K562 (cell line): ENCODE measurements at regions of chr7 and their contacts with region 1.

Region 1: GRCh38 chr7:116211006-116211912 is 920 bp downstream of the TES start:
- DNase-seq: peak; percentile 82 to 95 (median 88)
- ATAC-seq: peak; percentile 88
- H3K4me3 ChIP-seq: peak overlapping the region; percentile 74
- H3K27ac ChIP-seq: peak overlapping the region; percentile 88
- H3K4me1 ChIP-seq: peaks cover 10 to 28% of the 10 kb centered on the region in 2 experiments
- H3K27me3 ChIP-seq: no peaks in the 10 kb centered on the region
- CTCF ChIP-seq: no peak
- EP300 ChIP-seq: peak; percentile 54; the same call in 1 of the 2 replicates
- POLR2A ChIP-seq: peak; percentile 92
- RAD21 ChIP-seq: peak in 1 of 2 experiments; percentile 7; a peak in 2 of 4 replicates

Region 2: DNA sequence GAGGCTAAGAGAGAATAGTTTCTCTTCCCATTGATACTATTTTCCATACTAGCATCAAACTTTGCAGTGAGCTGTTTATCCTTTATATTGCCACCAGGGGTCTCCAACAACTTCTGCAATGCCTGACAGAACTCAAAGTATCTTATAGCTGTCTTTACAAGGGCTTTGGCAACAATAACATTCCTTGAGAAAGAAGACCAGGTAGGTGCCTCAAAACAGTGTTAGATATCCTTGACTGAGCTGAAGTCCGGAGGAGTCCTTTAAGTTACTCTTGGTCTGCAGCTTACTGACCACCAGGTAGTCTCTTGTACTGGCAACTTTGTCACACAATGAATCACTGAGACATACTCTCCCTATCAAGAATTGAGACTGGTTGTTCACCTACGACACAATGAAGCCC is 31.0 kb before region 1 on chr7:
- CTCF ChIA-PET with region 1: no interaction called
- POLR2A ChIA-PET with region 1: interaction called, 5 read pairs
- in situ Hi-C with region 1: no loop called
- intact Hi-C with region 1: loop called (anchors 1 kb)
- DNase-seq: peak; percentile 39 to 62 (median 48)
- ATAC-seq: peak; percentile 93
- H3K4me3 ChIP-seq: no peak overlapping the region
- H3K27ac ChIP-seq: no peak overlapping the region
- H3K4me1 ChIP-seq: peaks cover 0 to 5% of the 10 kb centered on the region in 2 experiments; a peak in 1 of 5 replicates
- H3K27me3 ChIP-seq: no peaks in the 10 kb centered on the region
- CTCF ChIP-seq: peak; percentile 70 to 92 (median 79)
- EP300 ChIP-seq: no peak
- POLR2A ChIP-seq: no peak
- RAD21 ChIP-seq: peak; percentile 98 to 99

Region 3: GRCh38 chr7:116224492-116225098 is 13.3 kb after region 1 on chr7:
- CTCF ChIA-PET with region 1: no interaction called
- POLR2A ChIA-PET with region 1: interaction called, 10 read pairs
- in situ Hi-C with region 1: no loop called
- intact Hi-C with region 1: no loop called
- DNase-seq: no peak
- ATAC-seq: no peak
- H3K4me3 ChIP-seq: no peak overlapping the region
- H3K27ac ChIP-seq: no peak overlapping the region
- H3K4me1 ChIP-seq: peaks cover 0 to 8% of the 10 kb centered on the region in 2 experiments; a peak in 2 of 5 replicates
- H3K27me3 ChIP-seq: no peaks in the 10 kb centered on the region
- CTCF ChIP-seq: no peak
- EP300 ChIP-seq: no peak
- POLR2A ChIP-seq: no peak
- RAD21 ChIP-seq: no peak

Region 4: DNA sequence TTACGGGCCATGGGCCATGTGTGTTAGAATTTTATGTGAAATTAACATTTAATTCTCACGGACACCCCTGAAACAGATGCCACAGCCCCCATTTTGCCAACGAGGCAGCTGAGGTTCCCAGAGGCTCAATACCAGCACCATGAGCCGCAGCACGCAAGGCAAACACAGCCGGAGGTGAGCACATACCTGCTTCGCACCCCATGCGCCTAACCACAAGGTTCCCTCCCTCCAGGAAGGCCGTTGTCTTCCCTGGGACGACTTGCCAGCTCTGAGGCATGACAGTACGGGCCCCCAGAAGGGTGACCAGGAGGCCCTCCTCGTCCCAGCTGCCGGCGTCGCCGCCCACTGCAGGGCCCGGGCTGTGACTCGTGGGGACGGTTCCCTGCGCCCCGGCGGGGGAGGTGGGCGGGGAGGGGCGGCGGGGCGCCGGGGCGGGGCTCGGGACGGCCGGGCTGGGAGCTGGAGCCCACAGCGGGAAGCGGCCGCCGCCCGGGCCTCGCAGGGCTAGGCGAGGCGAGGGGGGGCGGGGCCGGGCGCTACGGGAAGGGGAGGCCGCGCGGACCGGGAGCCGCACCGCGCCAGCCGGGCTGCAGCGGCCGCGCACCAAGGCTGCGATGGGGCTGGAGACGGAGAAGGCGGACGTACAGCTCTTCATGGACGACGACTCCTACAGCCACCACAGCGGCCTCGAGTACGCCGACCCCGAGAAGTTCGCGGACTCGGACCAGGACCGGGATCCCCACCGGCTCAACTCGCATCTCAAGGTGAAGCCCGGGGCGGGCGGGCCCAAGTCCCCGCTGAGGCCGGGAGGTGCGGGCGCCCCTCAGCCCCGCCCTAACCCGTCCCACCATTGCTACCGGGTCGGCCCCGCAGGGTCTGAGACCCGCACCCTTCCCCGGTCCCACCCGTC is 288.2 kb after region 1 on chr7 and contains the start of gene CAV2:
- CTCF ChIA-PET with region 1: no interaction called
- POLR2A ChIA-PET with region 1: no interaction called
- in situ Hi-C with region 1: no loop called
- intact Hi-C with region 1: loop called (anchors 5 kb)
- DNase-seq: peak; percentile 88 to 96 (median 93)
- ATAC-seq: peak; percentile 85
- H3K4me3 ChIP-seq: peak within 1 kb of the TSS; percentile 53
- H3K27ac ChIP-seq: peak within 1 kb of the TSS; percentile 73
- H3K4me1 ChIP-seq: peaks cover 25 to 38% of the 10 kb centered on the region in 2 experiments
- H3K27me3 ChIP-seq: no peaks in the 10 kb centered on the region
- CTCF ChIP-seq: no peak
- EP300 ChIP-seq: no peak
- POLR2A ChIP-seq: peak; percentile 69
- RAD21 ChIP-seq: no peak
- polyA plus RNA-seq, gene CAV2: 16.1 to 16.5 TPM

Region 5: DNA sequence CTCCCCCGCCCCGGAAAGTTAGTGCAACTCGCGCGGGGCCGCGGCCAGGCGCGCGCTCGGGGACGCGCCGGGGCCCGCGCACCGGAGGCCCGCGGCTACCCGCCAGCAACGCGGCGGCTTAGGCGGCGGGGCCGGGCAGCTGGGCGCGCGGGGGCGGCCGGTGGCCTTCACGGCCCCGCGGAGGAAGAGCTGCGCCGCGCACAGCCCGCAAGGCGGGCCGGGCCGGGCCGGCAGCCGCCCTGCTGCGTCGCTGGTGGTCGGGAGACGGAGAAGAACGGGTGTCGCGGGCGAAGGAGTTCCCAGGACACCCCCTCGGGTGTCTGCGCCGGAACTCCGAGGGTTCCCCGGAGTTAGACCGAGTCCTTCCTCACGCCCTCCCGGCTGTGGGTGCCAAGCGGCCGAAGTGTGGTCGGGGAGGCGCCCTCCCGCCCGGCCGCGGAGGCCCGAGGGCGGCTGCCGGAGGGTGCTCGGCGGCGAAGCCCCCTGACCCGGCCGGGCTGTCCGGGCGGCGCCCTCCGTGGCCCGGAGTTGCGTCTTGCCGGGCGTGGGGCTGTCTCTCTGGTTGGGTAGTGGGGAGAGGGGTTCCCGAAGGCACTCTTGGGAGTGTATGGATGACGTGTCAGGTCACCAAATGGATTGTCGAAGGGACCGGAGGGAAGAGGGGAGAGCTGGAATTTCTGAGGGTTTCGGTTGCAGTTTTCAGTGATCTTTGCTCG is 742.6 kb after region 1 on chr7:
- CTCF ChIA-PET with region 1: no interaction called
- POLR2A ChIA-PET with region 1: no interaction called
- in situ Hi-C with region 1: no loop called
- intact Hi-C with region 1: loop called (anchors 5 kb)
- DNase-seq: peak; percentile 84 to 90 (median 84)
- ATAC-seq: peak; percentile 59
- H3K4me3 ChIP-seq: peak overlapping the region; percentile 79
- H3K27ac ChIP-seq: peak overlapping the region; percentile 95
- H3K4me1 ChIP-seq: peaks cover 26 to 60% of the 10 kb centered on the region in 2 experiments
- H3K27me3 ChIP-seq: no peaks in the 10 kb centered on the region
- CTCF ChIP-seq: peak in 1 of 3 experiments; percentile 7; a peak in 1 of 6 replicates
- EP300 ChIP-seq: peak; percentile 60
- POLR2A ChIP-seq: peak; percentile 70
- RAD21 ChIP-seq: no peak

Region 6: DNA sequence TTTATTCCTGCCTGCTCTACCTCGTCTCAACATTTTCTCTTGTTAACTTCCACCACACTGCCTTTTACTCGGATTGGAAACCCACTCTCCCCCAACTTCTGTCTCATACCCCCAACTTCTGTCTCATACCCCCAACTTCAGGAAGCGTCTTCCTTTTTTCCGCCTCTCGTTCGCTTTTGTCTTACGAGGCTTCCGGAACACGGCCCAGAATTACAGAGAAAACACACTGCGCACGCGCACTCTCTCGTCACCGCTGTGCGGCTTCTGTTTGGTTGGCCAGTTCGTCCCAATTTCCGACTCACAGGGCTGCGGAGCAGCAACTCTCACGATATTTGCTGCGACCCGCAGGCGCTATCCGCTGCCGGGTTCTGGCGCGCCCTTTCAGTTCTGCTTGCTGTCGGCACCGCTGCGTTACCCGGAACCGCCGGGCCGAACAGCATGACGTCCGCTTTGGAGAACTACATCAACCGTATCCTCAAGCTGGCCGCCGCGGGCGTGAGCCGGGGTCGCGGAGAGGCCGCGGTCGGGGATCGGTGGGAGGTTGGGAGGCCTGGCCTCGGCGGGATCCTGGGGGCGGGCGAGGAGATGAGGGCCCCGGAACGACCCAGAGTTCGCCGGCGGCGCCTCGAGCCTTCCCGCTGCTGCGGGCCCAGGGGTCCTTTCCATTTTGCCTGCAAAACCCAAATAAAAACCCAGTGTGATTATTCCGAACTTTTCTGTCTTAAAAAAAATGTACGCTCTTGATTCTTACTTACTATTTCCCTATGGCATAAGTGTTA is 1972.7 kb after region 1 on chr7 and contains the start of gene LSM8:
- CTCF ChIA-PET with region 1: no interaction called
- POLR2A ChIA-PET with region 1: no interaction called
- in situ Hi-C with region 1: no loop called
- intact Hi-C with region 1: loop called (anchors 10 kb)
- DNase-seq: peak; percentile 93 to 100 (median 95)
- ATAC-seq: peak; percentile 95
- H3K4me3 ChIP-seq: peak within 1 kb of the TSS; percentile 68
- H3K27ac ChIP-seq: peak within 1 kb of the TSS; percentile 90
- H3K4me1 ChIP-seq: peaks cover 4 to 7% of the 10 kb centered on the region in 2 experiments; a peak in 2 of 5 replicates
- H3K27me3 ChIP-seq: no peaks in the 10 kb centered on the region
- CTCF ChIP-seq: peak in 1 of 3 experiments; percentile 11; a peak in 1 of 6 replicates
- EP300 ChIP-seq: no peak
- POLR2A ChIP-seq: peak; percentile 99
- RAD21 ChIP-seq: no peak
- polyA plus RNA-seq, gene LSM8: 192 to 243 TPM